ENCODE measurements at regions of chr11 and their contacts with region 1.

Region 1: DNA sequence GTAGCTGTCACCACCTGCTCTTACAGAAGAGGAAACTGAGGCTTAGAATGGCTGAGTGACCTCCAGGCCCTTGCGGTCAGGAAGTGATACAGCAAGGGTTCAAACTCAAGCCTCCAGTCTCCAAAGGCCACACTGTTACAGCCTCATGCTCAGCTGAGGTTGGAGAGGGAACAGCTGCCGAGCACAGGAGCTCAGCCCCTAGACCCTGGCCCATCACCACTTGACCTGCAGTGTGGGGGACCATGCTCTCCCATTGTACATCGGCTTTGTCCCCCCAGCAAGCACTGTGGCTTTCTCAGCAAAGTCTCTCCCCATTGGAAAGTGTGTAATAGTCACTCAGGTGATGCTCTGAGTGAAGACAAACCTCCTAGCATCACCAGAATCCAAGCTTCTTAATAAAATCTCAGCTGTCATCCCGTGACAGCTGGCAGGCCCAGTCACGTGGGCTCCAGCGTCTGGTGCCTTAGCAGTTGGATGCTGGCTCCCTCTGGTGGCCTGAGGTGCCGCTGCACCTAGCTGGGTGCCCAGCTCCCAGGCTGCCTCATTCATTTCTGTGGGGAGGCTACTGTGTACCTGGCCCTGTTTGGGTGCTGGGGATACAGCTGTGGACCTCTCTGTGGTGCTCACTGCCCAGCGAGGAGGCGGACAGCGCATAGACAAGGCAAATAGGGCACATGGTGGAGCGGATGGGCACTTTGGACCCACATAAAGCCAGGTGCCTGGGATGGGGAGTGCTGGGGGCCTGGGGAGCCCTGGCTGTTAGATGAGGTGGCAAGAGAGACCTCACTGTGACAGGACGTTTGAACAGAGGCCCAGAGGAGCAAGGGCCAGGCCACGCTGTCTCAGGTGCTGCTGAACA is 19.1 kb upstream of the MYRF start:
- DNase-seq: peak; percentile 92
- ATAC-seq: peak; percentile 95
- H3K4me3 Mint-ChIP-seq: no peak overlapping the region
- H3K27ac Mint-ChIP-seq: no peak overlapping the region
- H3K4me1 Mint-ChIP-seq: peaks cover 2% of the 10 kb centered on the region
- H3K27me3 Mint-ChIP-seq: no peaks in the 10 kb centered on the region

Region 2: DNA sequence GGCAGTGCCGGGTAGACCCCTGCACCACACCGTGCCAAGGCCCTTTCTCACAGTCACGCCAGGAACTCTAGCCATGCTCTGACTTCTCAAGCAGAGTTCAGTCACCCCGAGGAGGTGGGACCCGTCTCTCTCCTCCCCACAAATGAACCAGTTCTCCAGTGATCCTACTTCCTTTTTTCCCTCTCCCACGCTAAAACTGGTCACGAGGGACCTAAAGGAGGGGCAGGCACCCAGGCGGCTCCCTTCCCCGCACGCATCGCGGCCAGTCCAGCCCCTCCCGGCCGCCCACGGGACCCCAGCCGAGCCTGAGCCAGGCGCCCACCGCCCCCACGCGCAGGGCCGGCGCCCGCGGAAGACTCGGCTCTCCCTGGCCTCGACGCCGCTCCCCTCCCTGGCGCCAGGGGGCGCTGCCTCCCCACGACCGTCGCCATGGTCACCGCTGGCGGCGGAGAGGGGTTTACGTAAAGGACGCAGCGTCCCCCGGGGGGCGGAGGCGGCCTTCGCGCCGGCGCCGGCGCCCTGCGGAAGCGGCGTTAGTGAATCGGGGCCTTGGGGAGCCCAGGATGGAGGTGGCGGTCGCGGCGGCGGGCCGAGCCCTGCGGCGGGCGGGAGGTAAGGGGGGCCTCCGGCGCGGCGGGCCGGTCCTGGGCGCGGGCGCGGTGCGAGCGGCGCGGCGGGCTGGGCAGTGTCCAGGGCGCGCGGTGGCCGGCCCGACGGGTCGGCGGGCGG is 53.3 kb before region 1 on chr11 and contains the start of gene DAGLA:
- CTCF ChIA-PET with region 1: interaction called, 32 read pairs
- POLR2A ChIA-PET with region 1: no interaction called
- intact Hi-C with region 1: loop called (anchors 1 kb)
- DNase-seq: peak; percentile 86
- ATAC-seq: peak; percentile 86
- H3K4me3 Mint-ChIP-seq: peak within 1 kb of the TSS; percentile 61
- H3K27ac Mint-ChIP-seq: no peak within 1 kb of the TSS
- H3K4me1 Mint-ChIP-seq: peaks cover 4% of the 10 kb centered on the region
- H3K27me3 Mint-ChIP-seq: peaks cover 18% of the 10 kb centered on the region
- total RNA-seq, gene DAGLA: 0.09 to 0.14 TPM

Region 3: DNA sequence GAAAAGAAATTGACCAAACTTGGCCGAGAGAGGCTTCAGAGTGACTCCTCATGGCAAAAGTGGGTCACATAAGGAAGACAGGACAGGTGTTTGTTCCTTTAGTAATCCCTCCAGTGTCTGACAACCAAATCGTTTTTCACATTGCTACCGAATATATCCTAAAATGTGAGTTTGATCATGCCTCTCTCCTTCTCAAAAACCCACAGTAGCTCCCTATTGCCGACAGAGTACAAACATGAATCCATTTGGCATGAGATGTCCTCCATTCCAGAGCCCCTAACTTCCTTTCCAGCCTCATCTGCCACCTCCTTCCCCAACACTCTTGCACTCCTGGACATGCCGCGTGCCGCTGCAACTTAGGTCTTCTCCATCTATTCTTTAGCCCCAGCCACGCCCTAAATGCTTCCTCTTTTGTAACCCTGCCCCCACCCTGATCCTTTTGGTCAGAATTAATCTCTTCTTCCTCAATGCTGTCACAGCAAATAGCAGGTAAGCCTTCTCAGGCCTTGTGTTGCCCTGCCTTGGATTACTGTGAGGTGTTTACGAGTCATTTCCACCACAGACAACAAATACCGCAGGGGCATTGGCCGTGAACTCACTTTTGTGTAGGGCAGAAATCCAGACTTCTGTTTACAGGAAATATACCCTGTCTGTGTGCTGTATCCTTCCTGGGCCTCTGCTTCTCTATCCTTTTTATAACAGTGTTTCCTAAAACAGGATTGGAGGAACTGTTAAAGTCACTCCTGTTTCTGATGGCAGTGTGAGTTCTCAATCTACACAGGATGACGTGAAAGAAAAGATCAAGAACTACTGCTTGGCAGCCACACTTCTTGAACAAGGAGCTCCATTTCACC is 300.1 kb after region 1 on chr11:
- CTCF ChIA-PET with region 1: no interaction called
- POLR2A ChIA-PET with region 1: no interaction called
- intact Hi-C with region 1: no loop called
- DNase-seq: no peak
- ATAC-seq: no peak
- H3K4me3 Mint-ChIP-seq: no peak overlapping the region
- H3K27ac Mint-ChIP-seq: no peak overlapping the region
- H3K4me1 Mint-ChIP-seq: peaks cover 6% of the 10 kb centered on the region
- H3K27me3 Mint-ChIP-seq: no peaks in the 10 kb centered on the region